ENCODE measurements at regions of chr15 and their contacts with region 1.

Region 1: DNA sequence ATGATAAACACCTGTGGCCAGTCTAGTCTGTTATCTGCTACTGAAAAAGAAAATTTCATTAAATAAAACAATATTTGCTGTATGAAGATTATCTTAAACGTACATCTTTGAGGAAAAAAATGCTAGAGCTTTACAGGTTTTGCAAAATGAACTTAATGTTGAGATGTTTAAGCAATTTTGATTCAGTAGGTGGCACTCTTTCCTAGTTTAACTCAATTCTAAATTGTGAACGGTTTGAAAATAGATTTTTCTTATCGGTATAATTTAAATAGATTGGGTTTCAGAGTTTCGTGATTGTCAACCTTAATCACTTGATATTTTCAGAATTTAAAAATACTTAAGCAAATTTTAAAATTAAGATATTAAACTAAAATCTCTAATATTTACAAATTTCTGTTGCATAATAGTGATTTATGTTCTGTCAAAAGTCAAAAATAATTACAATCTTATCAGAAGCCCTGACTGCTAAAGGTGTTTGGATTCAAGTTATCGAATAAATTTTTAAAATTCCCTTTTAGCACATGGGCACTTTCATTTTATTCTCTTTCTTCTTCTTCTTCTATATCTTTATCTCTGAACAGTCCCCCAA is 7.0 kb upstream of the RNF111 start:
- DNase-seq: peak; percentile 51
- ATAC-seq: no peak
- H3K4me3 ChIP-seq: no peak overlapping the region
- H3K27ac ChIP-seq: no peak overlapping the region
- H3K4me1 ChIP-seq: no peaks in the 10 kb centered on the region
- H3K27me3 ChIP-seq: no peaks in the 10 kb centered on the region
- CTCF ChIP-seq: peak; percentile 60

Region 2: DNA sequence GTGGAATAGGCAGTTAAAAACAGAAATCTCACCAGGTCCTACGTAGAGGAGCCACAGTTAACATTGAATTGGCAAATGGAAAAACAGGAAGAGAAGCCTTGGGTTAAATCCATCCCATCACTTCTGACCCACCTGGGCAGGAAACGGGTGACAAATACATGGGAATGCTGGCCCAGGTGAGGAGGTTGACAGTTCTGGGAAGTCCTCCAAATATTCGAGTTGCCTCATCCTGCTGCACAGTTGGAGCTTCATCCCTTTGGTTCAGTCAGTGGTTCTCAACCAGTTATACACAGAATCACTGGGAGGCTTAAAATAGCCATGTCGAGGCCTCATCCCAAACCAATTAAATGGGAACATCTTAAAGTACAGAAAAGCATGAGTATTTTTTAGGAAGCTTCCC is 1383.5 kb before region 1 on chr15:
- CTCF ChIA-PET with region 1: no interaction called
- POLR2A ChIA-PET with region 1: no interaction called
- intact Hi-C with region 1: no loop called
- DNase-seq: peak; percentile 90
- ATAC-seq: peak; percentile 52
- H3K4me3 ChIP-seq: no peak overlapping the region
- H3K27ac ChIP-seq: peak overlapping the region; percentile 68
- H3K4me1 ChIP-seq: peaks cover 53% of the 10 kb centered on the region
- H3K27me3 ChIP-seq: no peaks in the 10 kb centered on the region
- CTCF ChIP-seq: no peak

Region 3: GRCh38 chr15:58650102-58650501 is 330.3 kb before region 1 on chr15:
- CTCF ChIA-PET with region 1: no interaction called
- POLR2A ChIA-PET with region 1: no interaction called
- intact Hi-C with region 1: no loop called
- DNase-seq: no peak
- ATAC-seq: no peak
- H3K4me3 ChIP-seq: no peak overlapping the region
- H3K27ac ChIP-seq: no peak overlapping the region
- H3K4me1 ChIP-seq: no peaks in the 10 kb centered on the region
- H3K27me3 ChIP-seq: no peaks in the 10 kb centered on the region
- CTCF ChIP-seq: no peak

Region 4: GRCh38 chr15:58957101-58957973 is 23.1 kb before region 1 on chr15:
- CTCF ChIA-PET with region 1: interaction called, 3 read pairs
- POLR2A ChIA-PET with region 1: no interaction called
- intact Hi-C with region 1: loop called (anchors 2 kb)
- DNase-seq: peak; percentile 90
- ATAC-seq: peak; percentile 89
- H3K4me3 ChIP-seq: 0 out of 2 replicates have a peak overlapping the region, but pooled peaks have one; percentile 34
- H3K27ac ChIP-seq: no peak overlapping the region
- H3K4me1 ChIP-seq: peaks cover 20% of the 10 kb centered on the region
- H3K27me3 ChIP-seq: no peaks in the 10 kb centered on the region
- CTCF ChIP-seq: peak; percentile 89

Region 5: GRCh38 chr15:59087731-59088130 is 107.3 kb after region 1 on chr15:
- CTCF ChIA-PET with region 1: no interaction called
- POLR2A ChIA-PET with region 1: no interaction called
- intact Hi-C with region 1: loop called (anchors 5 kb)
- DNase-seq: no peak
- ATAC-seq: no peak
- H3K4me3 ChIP-seq: no peak overlapping the region
- H3K27ac ChIP-seq: no peak overlapping the region
- H3K4me1 ChIP-seq: no peaks in the 10 kb centered on the region
- H3K27me3 ChIP-seq: no peaks in the 10 kb centered on the region
- CTCF ChIP-seq: no peak

Region 6: GRCh38 chr15:59501597-59501996 is 521.2 kb after region 1 on chr15:
- CTCF ChIA-PET with region 1: no interaction called
- POLR2A ChIA-PET with region 1: interaction called, 5 read pairs
- intact Hi-C with region 1: loop called (anchors 5 kb)
- DNase-seq: peak; percentile 91
- ATAC-seq: peak; percentile 96
- H3K4me3 ChIP-seq: no peak overlapping the region
- H3K27ac ChIP-seq: no peak overlapping the region
- H3K4me1 ChIP-seq: no peaks in the 10 kb centered on the region
- H3K27me3 ChIP-seq: no peaks in the 10 kb centered on the region
- CTCF ChIP-seq: peak; percentile 83